Breast epithelium (tissue), 4 donors: ENCODE measurements at regions of chr13 and their contacts with region 1.

Region 1: DNA sequence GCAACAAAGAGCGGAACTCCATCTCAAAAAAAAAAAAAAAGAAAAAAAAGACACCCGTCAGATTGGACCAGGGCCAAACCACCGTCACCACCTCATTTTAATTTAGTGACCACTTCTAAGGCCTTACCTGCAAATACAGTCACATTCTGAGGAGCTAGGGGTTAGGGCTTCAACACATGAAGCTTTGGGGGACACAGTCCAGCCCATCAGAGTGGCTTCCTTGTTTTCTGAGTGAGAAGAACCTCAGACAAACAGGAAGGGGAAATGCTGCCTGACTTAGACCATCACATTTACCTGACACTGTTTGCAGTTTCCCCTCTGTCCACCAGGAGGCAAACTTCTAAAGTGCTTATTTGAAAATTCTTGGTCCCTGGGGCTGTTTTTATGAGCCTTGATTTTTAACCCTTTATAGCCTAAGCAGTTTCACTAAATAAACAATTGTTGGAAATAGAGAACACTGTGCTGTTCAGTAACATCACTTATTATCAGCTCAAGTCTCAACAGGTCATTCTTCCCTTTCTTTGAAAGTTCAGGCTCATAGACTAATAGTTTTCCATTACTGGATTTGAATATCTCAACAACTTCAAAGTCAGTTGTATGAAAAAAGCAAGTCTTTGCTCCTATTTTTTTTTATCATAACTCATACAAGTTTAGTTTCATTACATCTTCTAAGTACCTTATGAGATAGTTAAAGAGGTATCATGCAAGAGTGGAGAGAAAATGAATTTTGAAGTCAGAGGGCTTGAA is 74.9 kb upstream of the WASF3 start:
- DNase-seq: peak; percentile 24 to 58
- H3K4me3 ChIP-seq: peak overlapping the region in 2 of 3 donors; percentile 16 to 34
- H3K27ac ChIP-seq: no peak overlapping the region
- H3K4me1 ChIP-seq: no peaks in the 10 kb centered on the region
- H3K27me3 ChIP-seq: no peaks in the 10 kb centered on the region
- CTCF ChIP-seq: peak; percentile 69 to 87 (median 74)
- POLR2A ChIP-seq: no peak

Region 2: DNA sequence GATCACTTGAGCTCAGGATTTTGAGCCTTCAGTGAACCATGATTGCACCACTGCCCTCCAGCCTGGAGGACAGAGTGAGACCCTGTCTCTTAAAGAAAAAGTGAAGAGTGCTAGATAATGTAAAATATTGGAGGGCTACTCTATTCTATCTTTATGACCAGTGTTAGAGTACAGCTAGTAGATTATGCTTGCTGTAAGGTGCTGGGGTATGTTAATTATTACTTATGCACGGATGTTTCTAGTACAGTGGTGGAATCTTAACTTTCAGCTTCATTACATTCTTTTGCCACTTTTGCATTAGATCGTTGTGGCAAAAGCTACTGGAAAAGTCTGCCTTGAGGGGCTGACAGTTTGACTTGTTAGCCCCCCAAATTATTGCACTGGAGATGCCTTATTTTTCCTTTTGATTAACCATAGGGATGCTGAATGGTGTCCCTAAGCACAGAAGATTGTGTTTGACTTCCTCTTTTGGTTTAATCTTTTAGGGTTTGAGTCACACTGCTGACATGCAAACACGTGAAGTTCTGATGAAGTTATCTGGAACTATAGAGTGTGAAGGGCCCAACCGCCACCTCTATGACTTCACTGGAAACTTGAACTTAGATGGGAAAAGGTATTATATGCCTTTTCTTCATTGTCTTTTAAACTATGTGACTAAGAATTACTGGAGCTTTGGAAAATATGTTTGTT is 941.0 kb before region 1 on chr13:
- intact Hi-C with region 1: loop called (anchors 10 kb)
- DNase-seq: no peak
- H3K4me3 ChIP-seq: no peak overlapping the region
- H3K27ac ChIP-seq: no peak overlapping the region
- H3K4me1 ChIP-seq: no peaks in the 10 kb centered on the region
- H3K27me3 ChIP-seq: no peaks in the 10 kb centered on the region
- CTCF ChIP-seq: no peak
- POLR2A ChIP-seq: no peak

Region 3: DNA sequence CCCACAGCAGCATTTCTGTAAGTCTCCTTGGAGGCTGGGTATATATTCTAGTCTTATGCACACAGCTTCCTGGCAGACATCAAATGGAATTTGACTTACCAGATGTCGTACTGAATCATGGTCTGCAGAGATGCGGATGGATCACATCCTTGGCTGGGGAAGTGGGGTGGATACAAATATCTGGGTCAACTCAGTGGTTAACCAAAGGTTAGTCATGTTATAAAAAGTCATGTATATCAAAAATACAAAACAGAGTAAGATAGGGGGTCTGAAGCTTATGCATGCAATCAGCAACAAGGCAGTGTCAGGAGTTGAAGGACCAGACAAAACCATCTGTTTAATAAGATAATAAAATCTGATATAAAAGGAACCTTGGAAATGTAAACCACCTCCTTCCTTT is 136.7 kb after region 1 on chr13:
- intact Hi-C with region 1: no loop called
- DNase-seq: no peak
- H3K4me3 ChIP-seq: no peak overlapping the region
- H3K27ac ChIP-seq: no peak overlapping the region
- H3K4me1 ChIP-seq: no peaks in the 10 kb centered on the region
- H3K27me3 ChIP-seq: no peaks in the 10 kb centered on the region
- CTCF ChIP-seq: no peak
- POLR2A ChIP-seq: no peak

Region 4: GRCh38 chr13:26698392-26699196 is 216.0 kb after region 1 on chr13:
- intact Hi-C with region 1: loop called (anchors 5 kb)
- DNase-seq: peak; percentile 73 to 89
- H3K4me3 ChIP-seq: peak overlapping the region; percentile 15 to 49 (median 15)
- H3K27ac ChIP-seq: no peak overlapping the region
- H3K4me1 ChIP-seq: no peaks in the 10 kb centered on the region
- H3K27me3 ChIP-seq: no peaks in the 10 kb centered on the region
- CTCF ChIP-seq: peak; percentile 84 to 96 (median 96)
- POLR2A ChIP-seq: no peak